ENCODE measurements at regions of chr2 and their contacts with region 1.

Region 1: GRCh38 chr2:217650716-217651360 is 352.0 kb downstream of the TNS1 start:
- DNase-seq: peak; percentile 46
- ATAC-seq: peak; percentile 95
- H3K4me3 Mint-ChIP-seq: no peak overlapping the region
- H3K27ac Mint-ChIP-seq: no peak overlapping the region
- H3K4me1 Mint-ChIP-seq: peaks cover 26% of the 10 kb centered on the region
- H3K27me3 Mint-ChIP-seq: no peaks in the 10 kb centered on the region
- CTCF ChIP-seq: peak; percentile 20; the same call in 1 of the 2 replicates

Region 2: DNA sequence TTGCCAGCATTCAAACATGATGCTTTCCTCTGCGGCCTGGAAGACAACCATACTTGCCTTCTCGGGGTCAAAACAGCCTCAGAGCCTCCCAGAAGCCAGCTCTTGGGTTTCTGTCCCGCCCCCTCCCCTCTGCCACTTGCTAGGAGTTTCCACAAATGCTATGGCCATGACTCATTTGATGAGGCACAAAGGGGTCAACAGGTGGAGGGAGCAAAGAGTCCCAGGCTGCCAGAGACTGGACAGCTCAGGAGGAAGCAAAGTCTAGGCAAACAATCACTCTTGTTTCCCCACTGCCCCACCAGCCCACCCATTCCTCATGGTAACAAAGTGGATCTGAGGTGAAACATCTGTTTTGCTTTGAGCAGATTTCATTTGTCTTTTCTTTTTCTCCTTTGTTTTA is 199.2 kb before region 1 on chr2:
- CTCF ChIA-PET with region 1: no interaction called
- POLR2A ChIA-PET with region 1: no interaction called
- DNase-seq: no peak
- ATAC-seq: no peak
- H3K4me3 Mint-ChIP-seq: no peak overlapping the region
- H3K27ac Mint-ChIP-seq: no peak overlapping the region
- H3K4me1 Mint-ChIP-seq: no peaks in the 10 kb centered on the region
- H3K27me3 Mint-ChIP-seq: no peaks in the 10 kb centered on the region; the same call in 1 of the 2 replicates
- CTCF ChIP-seq: no peak

Region 3: GRCh38 chr2:217585362-217585761 is 65.5 kb before region 1 on chr2:
- CTCF ChIA-PET with region 1: interaction called, 10 read pairs
- POLR2A ChIA-PET with region 1: no interaction called
- DNase-seq: no peak
- ATAC-seq: no peak
- H3K4me3 Mint-ChIP-seq: no peak overlapping the region
- H3K27ac Mint-ChIP-seq: no peak overlapping the region
- H3K4me1 Mint-ChIP-seq: no peaks in the 10 kb centered on the region
- H3K27me3 Mint-ChIP-seq: peaks cover 6% of the 10 kb centered on the region
- CTCF ChIP-seq: no peak

Region 4: GRCh38 chr2:217632043-217632442 is 18.8 kb before region 1 on chr2:
- CTCF ChIA-PET with region 1: interaction called, 29 read pairs
- POLR2A ChIA-PET with region 1: no interaction called
- DNase-seq: no peak
- ATAC-seq: no peak
- H3K4me3 Mint-ChIP-seq: no peak overlapping the region
- H3K27ac Mint-ChIP-seq: no peak overlapping the region
- H3K4me1 Mint-ChIP-seq: no peaks in the 10 kb centered on the region
- H3K27me3 Mint-ChIP-seq: no peaks in the 10 kb centered on the region; the same call in 1 of the 2 replicates
- CTCF ChIP-seq: no peak

Region 5: GRCh38 chr2:217713395-217714286 is 62.8 kb after region 1 on chr2:
- CTCF ChIA-PET with region 1: interaction called, 53 read pairs
- POLR2A ChIA-PET with region 1: no interaction called
- DNase-seq: peak; percentile 91
- ATAC-seq: peak; percentile 89
- H3K4me3 Mint-ChIP-seq: no peak overlapping the region
- H3K27ac Mint-ChIP-seq: no peak overlapping the region
- H3K4me1 Mint-ChIP-seq: peaks cover 13% of the 10 kb centered on the region
- H3K27me3 Mint-ChIP-seq: peaks cover 3% of the 10 kb centered on the region
- CTCF ChIP-seq: peak; percentile 96